Ascending aorta (tissue), 2 donors: ENCODE measurements at regions of chr21 and their contacts with region 1.

Region 1: GRCh38 chr21:34004974-34005373 is 68.4 kb upstream of the MRPS6 start:
- DNase-seq: peak in 1 of 2 donors; percentile 77
- H3K4me3 ChIP-seq: no peak overlapping the region
- H3K27ac ChIP-seq: peak overlapping the region; percentile 86
- H3K4me1 ChIP-seq: peaks cover 6 to 13% of the 10 kb centered on the region in 2 donors
- H3K27me3 ChIP-seq: no peaks in the 10 kb centered on the region
- CTCF ChIP-seq: no peak

Region 2: DNA sequence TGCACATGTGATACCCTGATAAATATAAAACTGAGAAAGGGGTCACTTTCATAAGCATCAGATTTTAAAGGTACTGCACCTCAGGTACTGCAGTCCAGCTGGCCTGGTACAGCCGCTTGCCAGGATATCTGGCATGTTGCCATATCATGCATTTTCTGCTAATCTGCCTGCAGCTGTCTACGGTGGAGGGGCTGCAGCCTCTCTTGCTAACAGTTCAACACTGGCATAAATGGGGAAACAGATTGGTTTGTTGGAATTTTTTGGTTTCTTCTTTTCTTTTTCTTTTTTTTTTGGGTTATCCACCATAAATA is 1797.6 kb before region 1 on chr21:
- intact Hi-C with region 1: no loop called
- DNase-seq: no peak
- H3K4me3 ChIP-seq: no peak overlapping the region
- H3K27ac ChIP-seq: no peak overlapping the region
- H3K4me1 ChIP-seq: no peaks in the 10 kb centered on the region
- H3K27me3 ChIP-seq: no peaks in the 10 kb centered on the region
- CTCF ChIP-seq: no peak

Region 3: GRCh38 chr21:33157303-33157702 is 847.7 kb before region 1 on chr21:
- intact Hi-C with region 1: no loop called
- DNase-seq: no peak
- H3K4me3 ChIP-seq: no peak overlapping the region
- H3K27ac ChIP-seq: no peak overlapping the region
- H3K4me1 ChIP-seq: no peaks in the 10 kb centered on the region
- H3K27me3 ChIP-seq: no peaks in the 10 kb centered on the region
- CTCF ChIP-seq: no peak

Region 4: GRCh38 chr21:33940164-33940880 is 64.7 kb before region 1 on chr21:
- intact Hi-C with region 1: loop called (anchors 5 kb)
- DNase-seq: no peak
- H3K4me3 ChIP-seq: no peak overlapping the region
- H3K27ac ChIP-seq: no peak overlapping the region
- H3K4me1 ChIP-seq: peaks cover 0 to 9% of the 10 kb centered on the region in 2 donors
- H3K27me3 ChIP-seq: no peaks in the 10 kb centered on the region
- CTCF ChIP-seq: no peak